Mammary epithelial cell (primary cell): ENCODE measurements at regions of chr11 and their contacts with region 1.

Region 1: GRCh38 chr11:110110854-110111253 is 17.7 kb downstream of the ZC3H12C start:
- DNase-seq: no peak
- H3K4me3 ChIP-seq: no peak overlapping the region
- H3K27ac ChIP-seq: no peak overlapping the region
- H3K4me1 ChIP-seq: no peaks in the 10 kb centered on the region
- H3K27me3 ChIP-seq: no peaks in the 10 kb centered on the region
- CTCF ChIP-seq: no peak

Region 2: GRCh38 chr11:110000031-110000502 is 110.8 kb before region 1 on chr11:
- CTCF ChIA-PET with region 1: no interaction called
- dilution Hi-C with region 1: no loop called
- in situ Hi-C with region 1: no loop called
- intact Hi-C with region 1: no loop called
- DNase-seq: peak; percentile 73
- H3K4me3 ChIP-seq: no peak overlapping the region
- H3K27ac ChIP-seq: no peak overlapping the region
- H3K4me1 ChIP-seq: peaks cover 3% of the 10 kb centered on the region
- H3K27me3 ChIP-seq: no peaks in the 10 kb centered on the region
- CTCF ChIP-seq: no peak

Region 3: DNA sequence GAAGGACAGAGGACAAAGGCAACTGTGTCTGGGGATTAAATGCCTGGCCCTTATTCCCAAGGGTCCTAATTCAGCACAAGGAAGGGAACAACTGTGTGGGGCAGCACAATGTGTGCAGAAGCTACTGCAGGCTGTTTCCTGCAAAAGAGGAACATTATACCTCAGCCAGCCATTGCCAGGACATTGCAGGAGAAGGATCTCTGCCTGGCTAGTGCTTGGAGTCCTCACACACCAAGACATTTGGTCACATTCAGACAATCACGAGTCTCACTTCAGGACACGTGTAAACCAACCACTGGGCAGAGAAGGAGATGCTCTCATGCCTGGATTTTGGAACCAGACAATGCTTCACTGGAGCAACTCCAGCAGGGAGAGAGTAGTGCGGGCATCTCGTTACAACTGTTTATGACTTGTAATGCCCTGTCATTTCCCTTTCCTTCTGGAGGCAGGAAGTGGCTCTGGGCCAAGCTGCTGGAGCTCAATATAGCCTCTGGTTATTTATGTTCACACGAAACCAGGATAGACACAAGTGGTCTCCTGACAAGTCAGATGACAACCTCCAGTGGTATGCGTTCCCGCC is 41.6 kb before region 1 on chr11:
- CTCF ChIA-PET with region 1: no interaction called
- dilution Hi-C with region 1: no loop called
- in situ Hi-C with region 1: no loop called
- intact Hi-C with region 1: no loop called
- DNase-seq: peak; percentile 93
- H3K4me3 ChIP-seq: no peak overlapping the region
- H3K27ac ChIP-seq: peak overlapping the region; percentile 81
- H3K4me1 ChIP-seq: peaks cover 31% of the 10 kb centered on the region
- H3K27me3 ChIP-seq: no peaks in the 10 kb centered on the region
- CTCF ChIP-seq: no peak

Region 4: DNA sequence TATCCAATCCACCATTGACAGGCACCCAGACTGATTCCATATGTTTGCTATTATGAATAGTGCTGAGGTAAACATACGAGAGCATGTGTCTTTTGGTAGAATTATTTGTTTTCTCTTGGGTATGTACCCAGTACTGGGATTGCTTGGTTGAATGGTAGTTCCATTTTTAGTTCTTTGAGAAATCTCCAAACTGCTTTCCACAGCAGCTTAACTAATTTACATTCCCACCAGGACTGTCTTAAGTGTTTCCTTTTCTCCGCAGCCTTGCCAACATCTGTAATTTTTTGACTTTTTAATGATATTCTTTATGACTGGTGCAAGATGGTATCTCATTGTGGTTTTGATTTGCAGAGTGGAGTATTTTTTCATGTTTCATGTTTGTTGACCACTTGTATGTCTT is 327.2 kb after region 1 on chr11:
- CTCF ChIA-PET with region 1: no interaction called
- dilution Hi-C with region 1: no loop called
- in situ Hi-C with region 1: no loop called
- intact Hi-C with region 1: no loop called
- DNase-seq: no peak
- H3K4me3 ChIP-seq: no peak overlapping the region
- H3K27ac ChIP-seq: no peak overlapping the region
- H3K4me1 ChIP-seq: peaks cover 17% of the 10 kb centered on the region
- H3K27me3 ChIP-seq: no peaks in the 10 kb centered on the region
- CTCF ChIP-seq: no peak

Region 5: GRCh38 chr11:111162305-111162704 is 1051.5 kb after region 1 on chr11:
- CTCF ChIA-PET with region 1: interaction called, 14 read pairs
- dilution Hi-C with region 1: no loop called
- in situ Hi-C with region 1: no loop called
- intact Hi-C with region 1: no loop called
- DNase-seq: peak; percentile 24
- H3K4me3 ChIP-seq: no peak overlapping the region
- H3K27ac ChIP-seq: no peak overlapping the region
- H3K4me1 ChIP-seq: no peaks in the 10 kb centered on the region
- H3K27me3 ChIP-seq: no peaks in the 10 kb centered on the region
- CTCF ChIP-seq: no peak